Natural killer cell (primary cell): ENCODE measurements at regions of chr19 and their contacts with region 1.

Region 1: DNA sequence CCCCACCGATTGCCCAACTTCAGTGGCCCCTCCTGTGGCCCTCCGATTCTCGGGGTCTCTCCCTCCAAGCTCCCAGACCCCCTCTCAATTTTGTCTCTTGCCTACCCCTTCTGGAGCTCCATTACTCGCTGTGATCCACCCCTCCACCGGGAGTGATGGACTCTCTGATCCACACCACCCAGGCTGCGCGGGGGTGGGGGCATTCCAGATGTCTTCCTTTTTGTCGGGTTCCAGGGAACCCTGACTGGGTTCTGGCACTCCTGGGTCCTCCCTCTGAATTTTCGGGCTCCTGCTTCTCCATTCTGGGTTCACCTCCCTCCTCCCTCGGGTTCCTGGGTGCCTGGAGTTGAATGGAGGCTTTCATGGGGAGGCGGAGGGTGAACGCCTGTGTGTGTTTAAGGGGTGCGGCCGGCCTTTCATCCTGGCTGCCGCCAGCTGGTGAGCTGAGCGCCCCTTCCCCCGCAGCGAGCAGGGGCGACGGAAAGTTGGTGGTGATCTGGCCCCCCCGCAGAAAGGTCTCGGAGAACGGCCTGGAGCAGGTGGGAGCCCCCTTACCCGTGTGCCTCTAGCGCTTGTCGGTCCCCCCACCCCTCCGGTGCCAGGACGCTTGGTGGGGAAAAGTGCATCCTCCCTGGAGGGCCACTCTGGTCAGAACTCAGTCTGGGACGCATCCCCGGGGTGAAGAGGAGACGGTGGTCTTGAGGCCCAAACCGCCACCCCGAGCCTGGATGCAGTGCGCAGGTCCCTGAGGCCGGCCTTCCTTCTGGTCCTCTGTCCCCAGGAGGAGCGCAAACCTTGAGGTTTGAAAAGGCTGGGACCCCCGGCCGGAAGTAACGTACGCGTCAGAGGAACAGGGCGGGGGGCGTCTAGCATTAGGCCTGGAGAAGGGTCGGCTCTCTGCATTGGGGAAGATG is 1.6 kb downstream of the MISP3 start:
- DNase-seq: peak; percentile 34 to 53
- ATAC-seq: peak; percentile 0 to 3 (median 2)
- H3K4me3 ChIP-seq: peak overlapping the region; percentile 61
- H3K4me3 Mint-ChIP-seq: peak overlapping the region; percentile 98
- H3K27ac ChIP-seq: peak overlapping the region; percentile 51
- H3K27ac Mint-ChIP-seq: peak overlapping the region; percentile 86 to 98
- H3K4me1 ChIP-seq: peaks cover 36% of the 10 kb centered on the region
- H3K4me1 Mint-ChIP-seq: peaks cover 15 to 25% of the 10 kb centered on the region in 2 donors
- H3K27me3 ChIP-seq: peaks cover 6% of the 10 kb centered on the region
- H3K27me3 Mint-ChIP-seq: no peaks in the 10 kb centered on the region
- CTCF ChIP-seq: no peak

Region 2: DNA sequence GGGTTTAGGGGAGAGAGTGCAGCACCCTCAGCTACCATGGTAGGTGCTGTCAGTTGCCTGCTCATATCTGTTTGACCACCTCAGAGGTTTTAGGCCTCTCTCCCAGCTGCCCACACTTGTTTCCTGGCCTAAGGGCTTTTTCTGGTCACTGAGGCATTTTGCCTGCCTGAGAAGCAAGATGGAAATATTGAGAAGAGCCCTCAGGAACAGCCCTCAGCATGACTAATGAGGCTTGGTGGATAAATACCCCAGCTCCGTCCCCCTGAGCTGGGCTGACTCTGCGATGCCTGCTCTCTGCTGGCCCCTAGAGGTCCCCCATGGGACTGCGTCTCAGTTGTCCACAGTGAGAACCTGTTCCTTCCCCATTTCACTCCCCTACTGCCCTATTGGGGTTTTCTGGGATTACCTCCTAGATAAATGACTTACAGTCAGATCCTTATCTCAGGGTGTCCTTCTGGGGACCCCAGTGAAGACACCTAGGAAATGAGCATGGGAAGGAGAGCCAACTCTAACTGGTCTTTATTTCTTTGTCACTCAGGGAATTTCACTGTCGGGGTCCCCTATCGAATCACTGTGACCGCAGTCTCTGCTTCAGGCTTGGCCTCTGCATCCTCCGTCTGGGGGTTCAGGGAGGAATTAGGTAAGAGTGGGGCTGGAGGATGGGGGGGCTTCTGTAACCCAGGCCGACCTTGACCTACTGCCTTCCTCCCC is 25.6 kb before region 1 on chr19:
- intact Hi-C with region 1: loop called (anchors 2 kb)
- DNase-seq: peak; percentile 79 to 84
- ATAC-seq: peak; percentile 87 to 98 (median 90)
- H3K4me3 ChIP-seq: no peak overlapping the region
- H3K4me3 Mint-ChIP-seq: no peak overlapping the region
- H3K27ac ChIP-seq: no peak overlapping the region
- H3K27ac Mint-ChIP-seq: peak overlapping the region; percentile 57 to 82
- H3K4me1 ChIP-seq: no peaks in the 10 kb centered on the region
- H3K4me1 Mint-ChIP-seq: peaks cover 0 to 11% of the 10 kb centered on the region in 2 donors
- H3K27me3 ChIP-seq: no peaks in the 10 kb centered on the region
- H3K27me3 Mint-ChIP-seq: no peaks in the 10 kb centered on the region
- CTCF ChIP-seq: peak; percentile 98